Transverse colon (tissue), 4 donors: ENCODE measurements at regions of chr17 and their contacts with region 1.

Region 1: GRCh38 chr17:40399185-40399584 is 18.5 kb downstream of the TOP2A start:
- DNase-seq: no peak
- H3K4me3 ChIP-seq: no peak overlapping the region
- H3K27ac ChIP-seq: no peak overlapping the region
- H3K4me1 ChIP-seq: no peaks in the 10 kb centered on the region
- H3K27me3 ChIP-seq: no peaks in the 10 kb centered on the region
- CTCF ChIP-seq: peak; percentile 59 to 68 (median 64)
- EP300 ChIP-seq: no peak
- POLR2A ChIP-seq: no peak

Region 2: DNA sequence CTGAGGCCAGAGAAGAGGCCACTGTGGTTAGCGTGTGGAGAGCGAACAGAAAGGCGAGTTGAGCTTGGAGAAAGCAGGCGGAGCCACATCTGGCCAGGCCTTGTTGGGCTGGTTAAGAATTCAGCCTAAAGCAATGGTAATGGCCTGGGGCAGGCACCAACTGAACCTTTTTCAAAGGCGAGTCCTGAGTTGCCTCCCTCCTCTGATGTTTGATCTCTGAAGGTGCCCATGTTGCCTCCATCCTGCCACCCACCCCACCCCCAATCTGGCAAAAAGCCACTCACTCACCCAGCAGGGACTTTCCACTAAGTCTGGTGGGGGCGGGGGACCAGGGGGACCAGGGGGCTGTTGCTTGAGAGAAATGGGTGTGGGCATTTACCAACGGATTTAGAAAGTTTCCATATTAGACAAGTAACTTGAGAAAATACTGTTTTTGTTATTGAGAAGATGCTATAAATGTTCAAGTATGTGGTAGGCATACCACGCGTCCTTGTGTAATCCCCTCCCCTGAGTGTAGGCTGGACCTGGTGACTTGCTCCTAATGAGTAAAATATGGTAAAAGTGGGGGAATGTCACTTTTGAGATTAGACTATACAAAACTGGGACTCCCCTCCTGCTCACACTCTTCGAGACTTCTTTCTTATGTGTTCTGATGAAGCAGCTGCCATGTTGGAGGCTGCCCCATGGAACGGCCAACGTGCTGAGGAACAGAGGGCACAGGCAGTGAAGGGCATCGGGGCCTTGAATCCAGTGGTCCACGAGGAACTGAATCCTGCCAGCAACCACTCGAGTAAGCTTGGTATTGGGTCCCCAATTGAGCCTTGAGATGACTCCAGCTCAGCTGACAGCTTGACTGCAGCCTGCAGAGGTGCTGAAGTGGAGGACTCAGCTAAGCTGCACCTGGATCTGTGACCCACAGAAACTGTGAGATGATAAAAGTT is 132.1 kb after region 1 on chr17:
- in situ Hi-C with region 1: no loop called
- intact Hi-C with region 1: loop called (anchors 2 kb)
- DNase-seq: no peak
- H3K4me3 ChIP-seq: no peak overlapping the region
- H3K27ac ChIP-seq: peak overlapping the region in 1 of 4 donors; percentile 68
- H3K4me1 ChIP-seq: peaks cover 14 to 30% (median 20%) of the 10 kb centered on the region in 4 donors
- H3K27me3 ChIP-seq: no peaks in the 10 kb centered on the region
- CTCF ChIP-seq: no peak
- EP300 ChIP-seq: no peak
- POLR2A ChIP-seq: no peak

Region 3: GRCh38 chr17:40559954-40560591 is 160.9 kb after region 1 on chr17:
- in situ Hi-C with region 1: no loop called
- intact Hi-C with region 1: loop called (anchors 2 kb)
- DNase-seq: peak; percentile 94
- H3K4me3 ChIP-seq: peak overlapping the region in 1 of 4 donors; percentile 33
- H3K27ac ChIP-seq: peak overlapping the region; percentile 11 to 65 (median 60)
- H3K4me1 ChIP-seq: peaks cover 6 to 23% (median 9%) of the 10 kb centered on the region in 4 donors
- H3K27me3 ChIP-seq: no peaks in the 10 kb centered on the region
- CTCF ChIP-seq: peak; percentile 93 to 98 (median 96)
- EP300 ChIP-seq: no peak
- POLR2A ChIP-seq: no peak